ENCODE measurements at regions of chr20 and their contacts with region 1.

Region 1: DNA sequence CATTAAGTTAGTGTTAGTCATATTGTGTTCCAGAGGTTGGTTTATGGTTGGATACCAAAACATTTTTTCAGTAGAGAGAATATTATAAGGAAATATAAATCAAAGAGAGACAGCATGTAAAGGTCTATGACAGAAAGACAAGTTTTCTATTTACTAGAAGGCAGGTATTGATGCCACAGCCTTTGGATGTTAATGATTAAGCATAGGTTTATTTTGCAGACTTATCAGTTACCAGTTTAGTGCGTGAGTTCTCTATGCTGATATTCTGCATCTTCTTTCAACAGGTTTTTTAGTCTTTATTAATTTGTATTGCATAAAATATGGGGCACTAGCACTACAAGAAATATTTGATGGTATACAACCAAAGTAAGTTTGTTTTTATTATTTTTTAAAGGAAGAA is 45.6 kb downstream of the CSE1L start:
- DNase-seq: no peak
- H3K4me3 ChIP-seq: no peak overlapping the region
- H3K27ac ChIP-seq: no peak overlapping the region
- H3K4me1 ChIP-seq: no peaks in the 10 kb centered on the region
- H3K27me3 ChIP-seq: no peaks in the 10 kb centered on the region
- CTCF ChIP-seq: no peak
- EP300 ChIP-seq: no peak
- POLR2A ChIP-seq: no peak
- RAD21 ChIP-seq: no peak

Region 2: GRCh38 chr20:49078296-49078695 is 13.5 kb before region 1 on chr20:
- CTCF ChIA-PET with region 1: no interaction called
- POLR2A ChIA-PET with region 1: interaction called, 15 read pairs
- DNase-seq: no peak
- H3K4me3 ChIP-seq: no peak overlapping the region
- H3K27ac ChIP-seq: no peak overlapping the region
- H3K4me1 ChIP-seq: no peaks in the 10 kb centered on the region
- H3K27me3 ChIP-seq: no peaks in the 10 kb centered on the region
- CTCF ChIP-seq: no peak
- EP300 ChIP-seq: no peak
- POLR2A ChIP-seq: no peak
- RAD21 ChIP-seq: no peak